Activated CD4-positive, alpha-beta T cell treated with anti-CD3 and anti-CD28 coated beads for 36 hours (primary cell): ENCODE measurements at regions of chrX and their contacts with region 1.

Region 1: GRCh38 chrX:52995135-52996020 is 37.1 kb upstream of the FAM156A start:
- DNase-seq: peak; percentile 94
- ATAC-seq: peak; percentile 97
- H3K4me3 Mint-ChIP-seq: peak overlapping the region; percentile 87
- H3K27ac Mint-ChIP-seq: peak overlapping the region; percentile 99
- H3K4me1 Mint-ChIP-seq: peaks cover 27% of the 10 kb centered on the region
- H3K27me3 Mint-ChIP-seq: no peaks in the 10 kb centered on the region

Region 2: GRCh38 chrX:51892921-51893745 is 1102.2 kb before region 1 on chrX and contains the start of gene MAGED1:
- CTCF ChIA-PET with region 1: no interaction called
- POLR2A ChIA-PET with region 1: no interaction called
- intact Hi-C with region 1: loop called in 1 of 2 experiments (anchors 5 kb)
- DNase-seq: peak; percentile 90
- ATAC-seq: peak; percentile 97
- H3K4me3 Mint-ChIP-seq: peak within 1 kb of the TSS; percentile 92
- H3K27ac Mint-ChIP-seq: peak within 1 kb of the TSS; percentile 83
- H3K4me1 Mint-ChIP-seq: peaks cover 19% of the 10 kb centered on the region
- H3K27me3 Mint-ChIP-seq: no peaks in the 10 kb centered on the region
- total RNA-seq, gene MAGED1: 46.8 to 55.4 TPM

Region 3: GRCh38 chrX:52261463-52262194 is 733.7 kb before region 1 on chrX:
- CTCF ChIA-PET with region 1: no interaction called
- POLR2A ChIA-PET with region 1: no interaction called
- intact Hi-C with region 1: loop called in 1 of 2 experiments (anchors 1 kb)
- DNase-seq: peak; percentile 91
- ATAC-seq: peak; percentile 99
- H3K4me3 Mint-ChIP-seq: peak overlapping the region; percentile 84
- H3K27ac Mint-ChIP-seq: peak overlapping the region; percentile 96
- H3K4me1 Mint-ChIP-seq: peaks cover 11% of the 10 kb centered on the region
- H3K27me3 Mint-ChIP-seq: peaks cover 4% of the 10 kb centered on the region

Region 4: DNA sequence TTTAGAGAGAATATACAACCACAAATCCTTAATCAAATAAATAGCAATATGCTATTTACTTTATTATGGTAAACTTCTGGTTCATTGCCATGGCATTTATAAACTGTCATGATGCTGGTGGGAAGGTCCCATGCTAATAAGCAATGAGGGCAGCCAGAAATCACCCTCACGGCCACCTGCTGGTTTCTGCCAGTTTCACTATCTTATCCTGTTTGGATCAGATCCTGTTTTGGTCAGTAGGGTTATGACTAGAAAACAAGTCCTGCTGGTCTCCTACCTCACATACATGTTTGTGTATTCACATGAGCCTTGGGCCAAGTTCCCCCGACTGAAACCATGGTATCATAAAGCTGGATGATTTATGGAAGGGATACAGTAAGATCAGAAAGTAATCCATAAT is 156.2 kb before region 1 on chrX:
- CTCF ChIA-PET with region 1: no interaction called
- POLR2A ChIA-PET with region 1: no interaction called
- intact Hi-C with region 1: no loop called
- DNase-seq: no peak
- ATAC-seq: no peak
- H3K4me3 Mint-ChIP-seq: no peak overlapping the region
- H3K27ac Mint-ChIP-seq: no peak overlapping the region
- H3K4me1 Mint-ChIP-seq: no peaks in the 10 kb centered on the region
- H3K27me3 Mint-ChIP-seq: no peaks in the 10 kb centered on the region

Region 5: GRCh38 chrX:53081925-53082772 is 86.8 kb after region 1 on chrX and contains the start of gene TSPYL2:
- CTCF ChIA-PET with region 1: no interaction called
- POLR2A ChIA-PET with region 1: interaction called, 4 read pairs
- intact Hi-C with region 1: loop called in 1 of 2 experiments (anchors 1 kb)
- DNase-seq: peak; percentile 96
- ATAC-seq: peak; percentile 91
- H3K4me3 Mint-ChIP-seq: peak within 1 kb of the TSS; percentile 91
- H3K27ac Mint-ChIP-seq: peak within 1 kb of the TSS; percentile 95
- H3K4me1 Mint-ChIP-seq: peaks cover 46% of the 10 kb centered on the region
- H3K27me3 Mint-ChIP-seq: no peaks in the 10 kb centered on the region
- total RNA-seq, gene TSPYL2: 56.7 to 73.3 TPM

Region 6: GRCh38 chrX:53093748-53094583 is 98.6 kb after region 1 on chrX and contains the start of gene KANTR:
- CTCF ChIA-PET with region 1: no interaction called
- POLR2A ChIA-PET with region 1: no interaction called
- intact Hi-C with region 1: loop called (anchors 1 to 5 kb)
- DNase-seq: peak; percentile 86
- ATAC-seq: peak; percentile 89
- H3K4me3 Mint-ChIP-seq: peak within 1 kb of the TSS; percentile 90
- H3K27ac Mint-ChIP-seq: peak within 1 kb of the TSS; percentile 91
- H3K4me1 Mint-ChIP-seq: peaks cover 19% of the 10 kb centered on the region
- H3K27me3 Mint-ChIP-seq: no peaks in the 10 kb centered on the region
- total RNA-seq, gene KANTR: 10.3 to 12.3 TPM

Region 7: DNA sequence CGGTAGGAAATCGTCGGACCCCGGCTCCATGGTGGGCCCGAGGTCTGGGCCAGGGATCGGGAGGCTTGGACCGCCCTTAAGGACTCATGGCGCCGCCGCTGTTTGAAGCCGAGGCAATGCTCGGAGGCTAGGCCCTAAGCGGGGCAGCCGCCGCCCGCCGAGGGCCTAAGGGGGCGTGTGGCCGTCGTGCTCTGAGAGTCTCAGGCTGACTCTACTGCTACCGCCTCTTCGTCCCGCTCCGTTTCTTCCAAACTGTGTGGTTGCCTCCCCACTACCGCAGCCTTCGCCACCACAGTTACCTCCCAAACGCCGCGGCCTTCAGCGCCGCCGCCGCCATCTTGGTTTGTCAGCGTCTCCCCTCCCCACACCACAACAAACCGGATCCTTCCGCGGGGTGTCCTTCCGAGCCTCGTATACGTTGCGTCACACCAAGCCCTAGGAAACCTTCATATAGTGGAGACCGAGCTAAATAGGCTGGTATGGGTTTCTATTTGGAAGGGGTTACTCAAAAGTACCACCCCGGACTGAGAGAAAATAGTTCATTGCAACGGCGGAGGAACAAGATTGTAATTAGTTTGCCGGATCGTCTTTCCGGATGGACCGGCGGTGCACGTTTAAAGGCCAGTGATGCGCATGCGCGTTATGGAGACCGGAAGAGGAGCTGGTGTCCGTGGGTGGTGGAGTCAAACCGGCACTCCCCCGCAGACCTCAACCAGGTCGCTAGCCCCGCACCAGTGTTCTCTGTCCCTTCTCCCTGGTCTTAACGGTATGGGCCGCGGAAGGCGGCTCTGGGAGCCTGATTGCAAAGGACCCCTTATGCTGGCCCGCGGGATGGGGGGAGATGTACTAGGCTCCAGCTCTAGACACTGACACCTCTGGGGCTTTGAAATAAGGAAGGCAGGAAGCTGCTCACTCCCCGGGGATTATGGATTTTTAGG is 229.8 kb after region 1 on chrX and contains the start of gene KDM5C:
- CTCF ChIA-PET with region 1: interaction called, 4 read pairs
- POLR2A ChIA-PET with region 1: no interaction called
- intact Hi-C with region 1: loop called in 1 of 2 experiments (anchors 1 kb)
- DNase-seq: peak; percentile 90
- ATAC-seq: peak; percentile 79
- H3K4me3 Mint-ChIP-seq: peak within 1 kb of the TSS; percentile 79
- H3K27ac Mint-ChIP-seq: peak within 1 kb of the TSS; percentile 92
- H3K4me1 Mint-ChIP-seq: peaks cover 29% of the 10 kb centered on the region
- H3K27me3 Mint-ChIP-seq: no peaks in the 10 kb centered on the region
- total RNA-seq, gene KDM5C: 84.6 to 96.5 TPM

Region 8: DNA sequence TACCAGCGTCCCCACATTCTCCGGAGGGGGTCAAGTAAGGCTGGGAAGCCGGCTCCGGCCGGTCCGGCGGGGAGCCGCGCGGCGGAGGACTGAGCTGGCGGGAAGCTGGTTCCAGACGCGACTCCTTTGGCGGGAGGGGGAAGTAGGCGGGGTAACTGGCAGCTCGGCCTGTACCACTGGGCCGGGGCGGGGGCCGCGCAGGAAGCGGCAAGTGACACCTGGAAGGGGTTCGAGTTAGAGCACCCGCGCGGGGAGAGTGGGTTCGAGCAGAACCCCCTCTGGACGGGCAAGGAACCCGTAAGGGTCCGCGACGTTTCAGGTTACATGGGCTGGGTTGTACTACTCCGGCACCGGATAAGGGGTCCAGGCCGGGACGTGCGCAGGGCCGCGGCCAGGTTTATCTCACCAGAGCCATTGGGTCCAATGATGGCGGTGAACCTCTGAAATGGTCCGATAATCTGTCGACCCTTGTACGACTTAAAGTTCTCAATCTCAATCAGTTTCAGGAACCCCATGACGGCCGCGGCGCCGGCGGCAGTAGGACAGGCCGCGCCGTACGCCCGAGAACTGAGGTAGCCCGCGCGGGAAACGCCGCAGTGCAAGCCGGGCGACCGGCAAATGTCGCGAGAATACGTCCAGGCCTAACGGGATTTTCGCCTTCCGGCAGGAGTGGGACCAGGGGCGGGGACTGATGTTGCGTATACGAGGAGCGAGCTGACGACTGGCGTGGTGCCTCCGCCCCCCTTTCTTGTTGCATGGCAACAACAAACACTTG is 426.9 kb after region 1 on chrX and contains the start of gene SMC1A:
- CTCF ChIA-PET with region 1: no interaction called
- POLR2A ChIA-PET with region 1: no interaction called
- intact Hi-C with region 1: loop called in 1 of 2 experiments (anchors 1 kb)
- DNase-seq: peak; percentile 96
- ATAC-seq: peak; percentile 91
- H3K4me3 Mint-ChIP-seq: peak within 1 kb of the TSS; percentile 94
- H3K27ac Mint-ChIP-seq: peak within 1 kb of the TSS; percentile 97
- H3K4me1 Mint-ChIP-seq: peaks cover 27% of the 10 kb centered on the region
- H3K27me3 Mint-ChIP-seq: no peaks in the 10 kb centered on the region
- total RNA-seq, gene SMC1A: 155 to 190 TPM